Cardiac septum (tissue), 1 donor: ENCODE measurements at regions of chr2 and their contacts with region 1.

Region 1: DNA sequence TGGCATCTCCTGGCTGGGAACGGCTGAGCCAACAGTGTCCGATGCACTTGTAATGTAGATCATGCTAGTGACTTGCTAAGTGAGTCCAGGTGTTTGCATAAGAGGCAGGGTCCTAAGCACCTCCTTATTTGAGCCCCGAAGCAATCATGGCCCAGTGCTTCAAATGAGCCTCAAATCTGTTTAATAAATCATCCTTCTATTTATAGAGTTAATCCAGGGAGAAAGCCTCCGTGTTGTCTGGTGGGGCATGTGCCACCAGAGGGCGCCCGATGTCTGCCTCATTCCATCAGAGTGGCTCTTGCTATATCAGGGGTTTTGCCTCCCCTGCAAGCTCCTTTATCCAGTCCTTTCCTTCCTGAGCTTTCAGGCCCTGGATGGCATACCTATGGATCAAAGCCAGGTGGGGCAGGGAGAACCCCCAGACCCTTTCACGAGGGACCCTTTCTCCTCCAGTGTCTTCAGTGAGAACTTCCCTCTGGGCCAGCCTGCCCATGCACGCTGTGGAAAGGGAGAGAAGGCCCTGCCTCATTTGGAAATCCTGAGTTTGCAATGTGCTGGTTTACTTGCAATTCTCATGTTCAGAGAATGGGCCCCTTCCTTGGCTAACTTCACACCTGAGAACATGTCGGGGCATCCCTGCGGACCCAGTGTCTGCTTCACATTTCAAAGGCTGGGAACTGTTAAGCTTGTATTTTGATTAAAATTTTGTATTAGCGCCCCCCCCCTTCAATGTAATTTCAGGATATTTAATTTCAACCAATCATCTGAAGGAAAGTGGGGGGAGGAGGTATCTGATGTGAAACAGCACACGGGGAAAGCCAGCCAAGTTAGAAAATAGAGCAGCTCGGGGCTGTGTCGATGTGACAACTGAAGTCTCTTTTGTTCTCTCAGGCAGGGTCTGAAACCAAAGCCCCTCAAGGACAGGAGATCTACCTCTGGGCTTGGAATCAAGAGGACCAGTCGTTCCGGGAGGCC is 39.7 kb downstream of the RDH14 start:
- DNase-seq: peak; percentile 91

Region 2: DNA sequence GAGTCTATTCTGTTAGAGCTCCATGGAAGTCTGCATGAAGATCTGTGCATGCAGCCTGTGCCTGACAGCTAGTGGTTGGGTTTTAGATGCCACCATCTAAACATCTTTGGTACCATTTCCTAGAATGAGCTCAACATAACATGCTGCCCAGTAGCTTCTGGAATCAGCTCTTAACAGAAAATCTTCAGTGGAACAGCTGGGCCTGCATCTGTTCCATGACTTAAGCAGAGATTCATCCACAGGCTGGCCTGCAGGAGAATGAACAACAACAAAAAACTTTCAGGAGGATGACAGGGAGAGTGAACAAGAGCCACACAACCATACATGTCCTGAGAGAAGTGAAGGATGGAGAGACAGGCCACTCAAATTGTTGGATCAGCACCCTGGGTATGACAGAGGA is 276.9 kb before region 1 on chr2:
- intact Hi-C with region 1: no loop called
- DNase-seq: no peak

Region 3: DNA sequence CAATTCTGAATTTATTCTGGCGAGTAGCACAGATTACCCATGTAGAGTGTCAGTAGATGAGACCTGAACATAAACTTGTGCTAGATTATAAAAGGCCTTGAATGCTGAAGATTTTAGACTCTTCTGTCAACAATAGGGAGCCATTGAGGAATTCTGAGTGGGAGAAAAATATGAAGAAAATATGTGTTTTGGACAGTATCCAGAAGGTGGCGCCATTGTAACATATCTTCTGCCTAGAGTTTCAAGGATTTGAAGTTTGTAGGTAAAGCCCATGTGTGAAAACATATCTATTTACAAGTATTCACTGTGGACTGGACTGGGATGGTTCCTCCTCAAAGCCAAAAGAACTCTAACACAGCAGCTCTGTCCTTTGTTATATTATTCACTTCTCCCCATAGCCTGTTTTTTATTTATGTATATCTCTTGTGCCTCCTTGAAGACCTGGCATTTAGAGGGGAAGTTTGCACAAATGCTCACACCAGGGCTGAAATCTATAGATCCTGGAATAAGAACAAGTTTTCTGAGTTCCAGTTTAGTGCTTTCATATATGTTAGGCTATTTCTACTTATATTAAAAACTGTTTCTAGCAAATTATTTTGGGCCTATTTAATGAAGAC is 85.2 kb before region 1 on chr2:
- intact Hi-C with region 1: loop called (anchors 5 kb)
- DNase-seq: no peak

Region 4: GRCh38 chr2:18560031-18560796 is 39.5 kb after region 1 on chr2 and contains the start of gene RDH14:
- intact Hi-C with region 1: loop called (anchors 2 kb)
- DNase-seq: peak; percentile 95
- total RNA-seq, gene RDH14: 35.4 TPM

Region 5: DNA sequence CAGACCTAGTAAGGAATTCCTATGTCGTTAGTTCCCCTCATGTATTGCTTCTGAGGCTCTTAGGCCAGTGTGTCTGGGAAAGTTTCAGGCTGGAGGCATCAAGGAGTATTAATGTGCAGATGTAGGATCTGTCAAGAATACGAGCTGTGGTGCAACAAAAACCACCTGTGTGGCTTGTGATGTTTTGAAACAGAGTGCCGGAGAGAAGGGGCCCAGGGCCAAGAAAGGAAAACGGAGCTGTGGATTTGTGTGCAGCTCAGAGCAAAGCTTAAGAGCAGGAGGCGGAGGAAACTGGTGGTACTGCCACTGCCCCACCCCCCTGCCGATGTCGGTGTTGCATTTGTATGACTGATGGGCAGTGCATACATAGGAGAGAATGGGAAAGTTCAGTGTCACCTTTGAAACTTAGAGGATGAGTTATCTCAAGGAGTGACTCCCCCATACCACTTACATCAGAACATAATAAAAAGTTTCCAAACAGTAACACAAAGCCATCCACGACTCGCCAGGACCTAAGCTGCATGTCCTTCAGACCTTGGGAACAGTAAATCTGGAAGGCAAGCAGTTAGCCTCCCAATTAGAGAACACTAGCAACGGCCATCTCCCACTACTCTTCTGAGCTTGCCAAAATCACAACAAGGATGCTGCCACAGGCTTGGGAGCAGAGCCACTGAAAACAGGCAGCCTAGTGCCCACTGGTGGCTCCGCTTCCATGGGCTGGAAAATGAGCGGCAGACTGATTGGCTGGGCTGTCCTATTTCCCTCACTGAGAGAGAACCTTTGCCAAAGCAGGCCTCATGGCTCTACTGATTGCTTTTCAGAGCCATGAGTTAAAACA is 221.4 kb after region 1 on chr2:
- intact Hi-C with region 1: loop called (anchors 2 kb)
- DNase-seq: no peak

Region 6: GRCh38 chr2:18976168-18976961 is 455.6 kb after region 1 on chr2:
- intact Hi-C with region 1: loop called (anchors 10 kb)
- DNase-seq: no peak

Region 7: GRCh38 chr2:19362755-19363473 is 842.2 kb after region 1 on chr2:
- intact Hi-C with region 1: loop called (anchors 2 kb)
- DNase-seq: peak; percentile 85